ENCODE measurements at regions of chr15 and their contacts with region 1.

Region 1: DNA sequence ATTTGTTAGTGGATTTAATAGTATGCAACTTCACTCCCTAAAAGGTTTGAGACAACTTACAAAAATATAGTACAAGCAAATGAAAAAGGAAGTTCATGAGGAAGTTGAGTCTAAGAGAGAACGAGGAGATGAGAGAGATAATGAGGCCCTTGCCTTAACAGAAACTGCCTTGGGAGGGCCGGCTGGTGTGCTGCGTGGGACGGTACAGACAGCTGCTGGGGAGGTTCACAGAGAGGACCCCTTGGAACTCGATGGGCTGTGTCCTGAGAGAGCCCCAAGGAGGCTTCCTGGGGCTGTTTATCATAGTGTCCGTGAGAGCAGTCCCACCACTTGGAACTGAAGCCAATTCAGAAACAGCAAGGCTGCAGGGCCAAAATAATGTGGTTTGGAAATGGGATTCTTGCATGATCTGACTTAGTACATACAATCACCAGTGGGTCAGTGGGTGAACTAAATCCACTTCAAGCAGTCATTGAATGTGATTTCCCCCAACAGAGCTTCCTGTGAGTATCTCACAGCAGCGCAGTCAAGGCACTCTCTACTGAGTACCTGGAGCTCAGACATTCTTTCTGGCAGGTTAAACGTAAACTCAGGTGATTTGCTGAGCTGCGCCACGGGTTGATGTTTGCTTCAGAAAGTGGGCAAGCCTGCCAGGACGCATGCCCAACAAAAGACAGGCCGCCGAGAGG is 90.8 kb downstream of the CRTC3 start:
- DNase-seq: peak in 5 of 9 donors; percentile 28 to 45 (median 39)
- ATAC-seq: peak; percentile 80
- H3K4me3 ChIP-seq: peak overlapping the region; percentile 32
- H3K4me3 Mint-ChIP-seq: peak overlapping the region; percentile 42 to 82 (median 75)
- H3K27ac ChIP-seq: peak overlapping the region; percentile 53
- H3K27ac Mint-ChIP-seq: peak overlapping the region; percentile 85 to 97 (median 90)
- H3K4me1 ChIP-seq: peaks cover 0 to 18% of the 10 kb centered on the region in 2 donors
- H3K4me1 Mint-ChIP-seq: peaks cover 21 to 44% (median 38%) of the 10 kb centered on the region in 7 donors
- H3K27me3 ChIP-seq: no peaks in the 10 kb centered on the region
- H3K27me3 Mint-ChIP-seq: no peaks in the 10 kb centered on the region

Region 2: GRCh38 chr15:90364251-90364650 is 256.3 kb before region 1 on chr15:
- CTCF ChIA-PET with region 1: no interaction called
- POLR2A ChIA-PET with region 1: no interaction called
- intact Hi-C with region 1: no loop called
- DNase-seq: no peak
- ATAC-seq: no peak
- H3K4me3 ChIP-seq: no peak overlapping the region
- H3K4me3 Mint-ChIP-seq: no peak overlapping the region
- H3K27ac ChIP-seq: no peak overlapping the region
- H3K27ac Mint-ChIP-seq: no peak overlapping the region
- H3K4me1 ChIP-seq: peaks cover 6 to 13% of the 10 kb centered on the region in 2 donors
- H3K4me1 Mint-ChIP-seq: peaks cover 11 to 42% (median 28%) of the 10 kb centered on the region in 7 donors
- H3K27me3 ChIP-seq: no peaks in the 10 kb centered on the region
- H3K27me3 Mint-ChIP-seq: no peaks in the 10 kb centered on the region

Region 3: DNA sequence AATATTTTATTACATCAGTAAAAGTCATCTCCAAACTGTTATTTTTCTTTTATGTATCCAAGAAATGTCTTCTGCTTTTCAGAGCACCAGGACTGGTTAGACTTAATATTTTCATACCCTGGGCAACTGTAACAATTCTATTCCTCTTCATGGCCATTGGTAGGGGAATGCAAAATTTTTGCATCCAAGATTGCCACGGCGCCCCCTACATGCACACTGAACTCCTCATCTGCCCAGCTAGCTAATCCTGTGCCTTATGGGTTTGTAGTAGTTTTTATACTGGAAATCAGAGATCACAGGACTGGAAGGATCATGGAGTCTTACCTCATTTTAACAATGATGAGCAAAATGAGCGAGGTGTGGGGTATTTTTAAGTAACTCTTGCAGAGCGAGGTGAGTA is 16.6 kb before region 1 on chr15:
- CTCF ChIA-PET with region 1: interaction called, 12 read pairs
- POLR2A ChIA-PET with region 1: no interaction called
- intact Hi-C with region 1: no loop called
- DNase-seq: peak in 4 of 9 donors; percentile 35 to 44 (median 38)
- ATAC-seq: peak; percentile 55
- H3K4me3 ChIP-seq: no peak overlapping the region
- H3K4me3 Mint-ChIP-seq: peak overlapping the region in 2 of 10 donors; percentile 0 to 7
- H3K27ac ChIP-seq: no peak overlapping the region
- H3K27ac Mint-ChIP-seq: peak overlapping the region in 8 of 9 donors; percentile 14 to 83 (median 70)
- H3K4me1 ChIP-seq: peaks cover 0 to 32% of the 10 kb centered on the region in 2 donors
- H3K4me1 Mint-ChIP-seq: peaks cover 37 to 76% (median 58%) of the 10 kb centered on the region in 7 donors
- H3K27me3 ChIP-seq: no peaks in the 10 kb centered on the region
- H3K27me3 Mint-ChIP-seq: no peaks in the 10 kb centered on the region

Region 4: DNA sequence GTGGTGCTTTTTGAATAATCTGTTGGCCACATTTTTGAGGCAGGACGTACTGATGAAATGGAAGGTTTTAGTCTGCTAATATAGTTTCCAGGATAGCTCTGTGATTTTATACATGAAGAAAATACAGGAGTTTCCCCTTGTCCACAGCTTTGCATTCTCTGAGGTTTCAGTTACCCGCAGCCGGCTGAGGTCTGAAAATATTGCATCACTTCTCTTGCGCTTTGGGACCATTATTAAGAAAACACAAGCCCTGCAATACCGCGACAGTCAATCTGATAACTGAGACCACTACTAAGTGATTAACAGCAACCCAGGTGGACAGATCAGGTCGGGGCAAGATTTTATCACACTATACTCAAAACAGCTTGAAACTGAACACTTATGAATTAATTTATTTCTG is 129.7 kb after region 1 on chr15:
- CTCF ChIA-PET with region 1: no interaction called
- POLR2A ChIA-PET with region 1: no interaction called
- intact Hi-C with region 1: loop called in 1 of 2 experiments (anchors 10 kb)
- DNase-seq: no peak
- ATAC-seq: peak; percentile 55
- H3K4me3 ChIP-seq: no peak overlapping the region
- H3K4me3 Mint-ChIP-seq: peak overlapping the region in 1 of 10 donors; percentile 23
- H3K27ac ChIP-seq: no peak overlapping the region
- H3K27ac Mint-ChIP-seq: peak overlapping the region in 1 of 9 donors; percentile 70
- H3K4me1 ChIP-seq: no peaks in the 10 kb centered on the region
- H3K4me1 Mint-ChIP-seq: peaks cover 0 to 55% (median 0%) of the 10 kb centered on the region in 7 donors
- H3K27me3 ChIP-seq: no peaks in the 10 kb centered on the region
- H3K27me3 Mint-ChIP-seq: no peaks in the 10 kb centered on the region

Region 5: DNA sequence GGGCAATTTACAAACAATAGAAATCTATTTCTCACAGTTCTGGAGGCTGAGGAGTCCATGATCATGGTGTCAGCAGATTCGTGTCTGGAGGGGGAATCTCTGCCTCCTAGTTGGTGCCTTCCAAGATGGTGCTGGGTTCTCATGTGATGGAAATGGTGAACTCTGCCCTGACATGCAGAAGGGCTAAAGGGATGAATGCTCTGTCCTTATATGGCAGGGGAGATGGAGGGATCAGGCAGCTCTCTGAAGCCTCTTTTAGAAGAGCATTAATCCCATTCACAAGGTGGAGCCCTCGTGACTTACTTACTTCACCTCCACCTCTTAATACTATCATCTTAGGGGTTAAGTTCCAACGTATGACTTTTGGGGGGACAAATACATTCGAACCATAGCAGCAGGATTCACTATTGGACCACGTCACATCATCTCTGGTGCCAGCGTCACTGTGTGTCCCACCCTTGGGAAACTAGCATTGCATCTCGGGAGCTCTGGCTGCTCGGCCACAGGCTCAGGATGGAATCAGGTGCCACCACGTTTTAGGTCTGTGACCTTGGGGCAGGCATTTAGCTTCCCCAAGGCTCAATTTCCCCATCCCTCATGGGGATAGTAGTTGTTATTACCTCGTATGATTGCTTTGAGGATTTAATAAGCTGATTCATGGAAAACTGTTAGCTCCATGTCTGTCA is 532.5 kb after region 1 on chr15:
- CTCF ChIA-PET with region 1: no interaction called
- POLR2A ChIA-PET with region 1: no interaction called
- intact Hi-C with region 1: no loop called
- DNase-seq: no peak
- ATAC-seq: no peak
- H3K4me3 ChIP-seq: no peak overlapping the region
- H3K4me3 Mint-ChIP-seq: no peak overlapping the region
- H3K27ac ChIP-seq: no peak overlapping the region
- H3K27ac Mint-ChIP-seq: no peak overlapping the region
- H3K4me1 ChIP-seq: no peaks in the 10 kb centered on the region
- H3K4me1 Mint-ChIP-seq: no peaks in the 10 kb centered on the region
- H3K27me3 ChIP-seq: peaks cover 2 to 5% of the 10 kb centered on the region in 2 donors
- H3K27me3 Mint-ChIP-seq: peaks cover 20 to 76% (median 75%) of the 10 kb centered on the region in 5 donors